ENCODE measurements at regions of chr20 and their contacts with region 1.

Region 1: DNA sequence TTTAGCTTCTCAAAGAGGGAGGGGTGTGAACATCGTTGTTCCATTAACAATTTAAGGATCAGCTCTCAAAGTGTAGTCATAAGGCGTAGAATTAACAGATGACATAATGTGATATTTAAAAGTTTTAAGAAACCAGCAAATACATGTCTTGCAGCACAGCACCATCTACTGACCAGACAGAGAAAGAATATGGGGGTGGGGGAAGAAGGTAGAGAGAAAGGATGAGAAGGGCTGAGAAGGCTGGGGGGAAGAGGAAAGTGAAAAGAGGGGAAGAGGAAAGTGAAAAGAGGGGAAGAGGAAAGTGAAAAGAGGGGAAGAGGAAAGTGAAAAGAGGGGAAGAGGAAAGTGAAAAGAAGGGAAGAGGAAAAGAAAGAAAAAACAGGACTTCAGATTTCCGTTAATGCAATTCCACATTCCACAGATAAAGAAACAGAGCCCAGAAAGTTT is 80.9 kb downstream of the HAO1 start:
- DNase-seq: peak; percentile 81
- H3K4me3 ChIP-seq: no peak overlapping the region
- H3K27ac ChIP-seq: peak overlapping the region; percentile 45
- H3K4me1 ChIP-seq: peaks cover 28% of the 10 kb centered on the region
- H3K27me3 ChIP-seq: no peaks in the 10 kb centered on the region
- CTCF ChIP-seq: peak; percentile 55 to 63
- POLR2A ChIP-seq: no peak

Region 2: DNA sequence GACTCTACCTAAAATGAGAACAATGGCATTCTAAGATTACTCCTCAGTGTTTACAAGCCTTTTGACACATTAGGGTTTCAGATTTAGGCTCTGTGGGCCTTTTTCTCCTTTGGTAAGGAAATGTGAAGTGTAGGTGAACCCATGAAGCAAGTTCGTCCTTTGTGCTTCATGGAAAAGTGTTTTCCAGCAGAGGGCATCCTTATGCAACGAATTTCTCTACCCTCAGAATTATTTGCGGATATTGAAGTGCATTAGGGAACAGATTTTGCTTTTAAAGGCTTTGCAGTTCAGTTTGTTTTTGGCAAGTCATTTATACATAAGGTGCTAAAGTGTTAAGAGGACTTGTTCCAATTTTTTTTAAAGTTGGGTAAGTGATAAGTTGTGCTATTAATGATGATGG is 1680.8 kb before region 1 on chr20:
- CTCF ChIA-PET with region 1: interaction called, 3 read pairs
- POLR2A ChIA-PET with region 1: no interaction called
- dilution Hi-C with region 1: no loop called
- intact Hi-C with region 1: loop called (anchors 1 kb)
- DNase-seq: peak; percentile 67
- H3K4me3 ChIP-seq: no peak overlapping the region
- H3K27ac ChIP-seq: no peak overlapping the region
- H3K4me1 ChIP-seq: no peaks in the 10 kb centered on the region
- H3K27me3 ChIP-seq: peaks cover 0 to 2% of the 10 kb centered on the region in 2 experiments
- CTCF ChIP-seq: peak; percentile 29 to 36
- POLR2A ChIP-seq: no peak

Region 3: GRCh38 chr20:6636209-6637159 is 1222.9 kb before region 1 on chr20:
- CTCF ChIA-PET with region 1: interaction called, 10 read pairs
- POLR2A ChIA-PET with region 1: no interaction called
- dilution Hi-C with region 1: no loop called
- intact Hi-C with region 1: loop called (anchors 1 kb)
- DNase-seq: peak; percentile 85
- H3K4me3 ChIP-seq: no peak overlapping the region
- H3K27ac ChIP-seq: no peak overlapping the region
- H3K4me1 ChIP-seq: no peaks in the 10 kb centered on the region
- H3K27me3 ChIP-seq: no peaks in the 10 kb centered on the region
- CTCF ChIP-seq: peak; percentile 52 to 62
- POLR2A ChIP-seq: no peak

Region 4: GRCh38 chr20:7113577-7114466 is 745.6 kb before region 1 on chr20:
- CTCF ChIA-PET with region 1: interaction called, 15 read pairs
- POLR2A ChIA-PET with region 1: no interaction called
- dilution Hi-C with region 1: no loop called
- intact Hi-C with region 1: loop called (anchors 5 kb)
- DNase-seq: peak; percentile 53
- H3K4me3 ChIP-seq: no peak overlapping the region
- H3K27ac ChIP-seq: no peak overlapping the region
- H3K4me1 ChIP-seq: no peaks in the 10 kb centered on the region
- H3K27me3 ChIP-seq: no peaks in the 10 kb centered on the region
- CTCF ChIP-seq: peak; percentile 53 to 68
- POLR2A ChIP-seq: no peak

Region 5: GRCh38 chr20:7375905-7376304 is 483.5 kb before region 1 on chr20:
- CTCF ChIA-PET with region 1: interaction called, 3 read pairs
- POLR2A ChIA-PET with region 1: no interaction called
- dilution Hi-C with region 1: no loop called
- intact Hi-C with region 1: loop called (anchors 2 kb)
- DNase-seq: peak; percentile 34
- H3K4me3 ChIP-seq: no peak overlapping the region
- H3K27ac ChIP-seq: no peak overlapping the region
- H3K4me1 ChIP-seq: no peaks in the 10 kb centered on the region
- H3K27me3 ChIP-seq: no peaks in the 10 kb centered on the region
- CTCF ChIP-seq: peak; percentile 9 to 23
- POLR2A ChIP-seq: no peak

Region 6: DNA sequence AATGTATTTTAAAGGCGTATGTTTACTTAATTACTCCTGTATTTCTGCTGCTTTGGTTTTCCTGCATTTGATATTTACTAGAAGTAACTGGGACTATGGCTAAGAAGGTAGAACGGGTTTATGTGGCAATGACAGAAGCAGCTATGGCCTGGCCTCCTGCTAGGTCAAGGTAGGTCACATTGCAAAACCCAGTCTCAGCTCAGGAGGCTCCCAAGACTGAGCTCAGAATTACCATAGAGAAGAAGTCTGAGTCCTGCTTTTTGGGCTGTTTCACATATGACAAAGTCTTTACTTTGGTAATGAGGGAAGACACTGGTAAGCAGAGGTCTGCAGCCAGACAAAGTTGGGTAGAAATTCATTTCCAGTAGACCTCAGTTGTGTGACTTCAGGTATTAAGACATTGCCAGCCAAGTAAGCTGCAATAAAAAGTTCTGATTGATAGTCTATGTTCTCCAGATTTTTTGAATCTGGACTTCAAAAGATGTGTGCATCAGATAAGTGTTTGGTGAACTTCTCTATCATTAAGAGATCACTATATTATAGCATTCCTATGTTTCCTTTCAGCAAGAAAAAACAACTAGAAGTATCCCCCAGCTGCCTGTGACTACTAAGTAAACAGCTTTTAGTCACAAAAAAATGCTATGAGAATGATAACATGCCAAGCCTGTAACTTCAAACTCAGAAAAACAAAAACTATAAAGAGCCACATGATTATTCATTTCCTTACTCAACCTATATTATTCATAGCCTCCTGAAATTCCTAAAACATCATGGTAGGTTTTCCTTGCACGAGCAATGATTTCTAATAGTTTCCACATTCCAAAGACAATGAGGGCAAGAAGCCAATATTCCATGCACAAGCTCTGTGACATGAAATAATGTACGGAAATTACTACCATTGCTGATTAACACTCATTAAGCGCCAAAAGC is 231.4 kb before region 1 on chr20:
- CTCF ChIA-PET with region 1: interaction called, 12 read pairs
- POLR2A ChIA-PET with region 1: no interaction called
- dilution Hi-C with region 1: no loop called
- intact Hi-C with region 1: loop called (anchors 1 kb)
- DNase-seq: peak; percentile 99
- H3K4me3 ChIP-seq: no peak overlapping the region
- H3K27ac ChIP-seq: peak overlapping the region; percentile 97
- H3K4me1 ChIP-seq: peaks cover 28% of the 10 kb centered on the region
- H3K27me3 ChIP-seq: no peaks in the 10 kb centered on the region
- CTCF ChIP-seq: no peak
- POLR2A ChIP-seq: no peak

Region 7: DNA sequence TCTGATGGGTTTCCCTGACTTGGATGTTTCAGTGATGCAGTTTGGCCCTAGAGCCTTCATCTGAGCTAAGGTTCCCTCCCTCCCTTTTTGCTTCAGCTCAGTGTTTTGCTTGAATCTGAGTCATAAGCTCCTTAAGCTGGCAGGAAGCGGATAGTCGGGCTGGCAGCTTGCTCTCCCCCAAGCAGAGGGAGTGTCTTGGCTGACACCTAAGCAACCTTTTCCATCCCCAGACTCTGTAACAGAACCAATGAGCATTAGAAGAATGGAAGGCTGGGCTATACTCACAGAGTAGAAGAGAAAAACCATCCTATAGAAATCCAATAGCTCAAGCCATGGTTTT is 17.4 kb before region 1 on chr20:
- CTCF ChIA-PET with region 1: interaction called, 18 read pairs
- POLR2A ChIA-PET with region 1: no interaction called
- dilution Hi-C with region 1: no loop called
- intact Hi-C with region 1: loop called (anchors 1 kb)
- DNase-seq: peak; percentile 93
- H3K4me3 ChIP-seq: no peak overlapping the region
- H3K27ac ChIP-seq: peak overlapping the region; percentile 89
- H3K4me1 ChIP-seq: peaks cover 24% of the 10 kb centered on the region
- H3K27me3 ChIP-seq: no peaks in the 10 kb centered on the region
- CTCF ChIP-seq: no peak
- POLR2A ChIP-seq: no peak

Measured in endothelial cell of umbilical vein (primary cell).